Activated CD4-positive, alpha-beta T cell treated with anti-CD3 and anti-CD28 coated beads for 36 hours (primary cell): ENCODE measurements at regions of chr14 and their contacts with region 1.

Region 1: GRCh38 chr14:105700622-105701288 is 174.4 kb downstream of the TMEM121 start:
- DNase-seq: peak; percentile 41
- ATAC-seq: peak; percentile 35
- H3K4me3 Mint-ChIP-seq: no peak overlapping the region
- H3K27ac Mint-ChIP-seq: no peak overlapping the region
- H3K4me1 Mint-ChIP-seq: peaks cover 3% of the 10 kb centered on the region
- H3K27me3 Mint-ChIP-seq: peaks cover 2% of the 10 kb centered on the region

Region 2: DNA sequence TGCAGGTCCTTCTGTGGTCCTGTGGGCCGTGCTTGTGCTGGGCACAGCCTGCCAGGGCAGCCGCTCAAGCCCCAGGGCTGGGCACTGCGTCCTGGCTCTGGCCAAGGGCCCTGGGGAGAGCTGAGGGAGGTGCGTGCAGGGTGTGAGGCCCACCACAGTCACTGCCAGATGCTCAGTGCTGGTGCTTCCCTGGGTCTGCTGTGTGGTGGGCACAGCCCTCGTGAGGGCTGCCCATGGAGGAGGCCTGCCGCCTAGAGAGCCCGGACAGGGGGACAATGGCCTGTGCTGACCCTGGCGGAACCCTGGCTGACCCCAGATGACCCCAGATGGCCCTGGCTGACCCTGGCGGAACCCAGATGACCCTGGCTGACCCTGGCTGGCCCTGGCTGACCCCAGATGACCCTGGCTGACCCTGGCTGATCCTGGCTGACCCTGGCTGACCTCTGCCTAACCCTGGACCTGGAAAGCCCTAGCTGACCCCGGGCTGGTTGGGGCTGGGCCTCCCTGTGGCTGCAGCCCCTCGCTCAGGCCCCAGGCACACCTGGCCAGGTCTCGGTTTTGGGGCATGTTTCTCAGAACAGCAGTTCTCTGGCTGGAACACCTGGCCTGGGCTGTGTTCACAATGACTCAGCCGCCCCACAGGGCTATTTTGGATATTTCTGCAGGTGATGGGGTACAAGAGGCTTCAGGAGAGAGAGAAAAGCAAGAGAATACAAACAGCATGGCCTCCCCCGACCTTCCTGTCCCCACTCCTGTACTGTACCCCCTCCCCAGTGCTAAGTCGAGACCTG is 119.0 kb before region 1 on chr14:
- CTCF ChIA-PET with region 1: no interaction called
- POLR2A ChIA-PET with region 1: no interaction called
- intact Hi-C with region 1: loop called in 1 of 2 experiments (anchors 2 kb)
- DNase-seq: no peak
- ATAC-seq: no peak
- H3K4me3 Mint-ChIP-seq: no peak overlapping the region
- H3K27ac Mint-ChIP-seq: no peak overlapping the region
- H3K4me1 Mint-ChIP-seq: no peaks in the 10 kb centered on the region
- H3K27me3 Mint-ChIP-seq: no peaks in the 10 kb centered on the region

Region 3: GRCh38 chr14:105682940-105683570 is 17.7 kb before region 1 on chr14:
- CTCF ChIA-PET with region 1: no interaction called
- POLR2A ChIA-PET with region 1: no interaction called
- intact Hi-C with region 1: no loop called
- DNase-seq: no peak
- ATAC-seq: no peak
- H3K4me3 Mint-ChIP-seq: no peak overlapping the region
- H3K27ac Mint-ChIP-seq: no peak overlapping the region
- H3K4me1 Mint-ChIP-seq: peaks cover 2% of the 10 kb centered on the region
- H3K27me3 Mint-ChIP-seq: peaks cover 3% of the 10 kb centered on the region